Activated CD4-positive, alpha-beta memory T cell treated with anti-CD3 and anti-CD28 coated beads, Interleukin-2, amount 10 ng/mL, durations not matched to agents 7 days and 5 days (primary cell): ENCODE measurements at regions of chr2 and their contacts with region 1.

Region 1: DNA sequence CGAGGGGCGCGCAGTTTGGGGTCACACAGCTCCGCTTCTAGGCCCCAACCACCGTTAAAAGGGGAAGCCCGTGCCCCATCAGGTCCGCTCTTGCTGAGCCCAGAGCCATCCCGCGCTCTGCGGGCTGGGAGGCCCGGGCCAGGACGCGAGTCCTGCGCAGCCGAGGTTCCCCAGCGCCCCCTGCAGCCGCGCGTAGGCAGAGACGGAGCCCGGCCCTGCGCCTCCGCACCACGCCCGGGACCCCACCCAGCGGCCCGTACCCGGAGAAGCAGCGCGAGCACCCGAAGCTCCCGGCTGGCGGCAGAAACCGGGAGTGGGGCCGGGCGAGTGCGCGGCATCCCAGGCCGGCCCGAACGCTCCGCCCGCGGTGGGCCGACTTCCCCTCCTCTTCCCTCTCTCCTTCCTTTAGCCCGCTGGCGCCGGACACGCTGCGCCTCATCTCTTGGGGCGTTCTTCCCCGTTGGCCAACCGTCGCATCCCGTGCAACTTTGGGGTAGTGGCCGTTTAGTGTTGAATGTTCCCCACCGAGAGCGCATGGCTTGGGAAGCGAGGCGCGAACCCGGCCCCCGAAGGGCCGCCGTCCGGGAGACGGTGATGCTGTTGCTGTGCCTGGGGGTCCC is at the start of gene ITGA4:
- DNase-seq: peak; percentile 90
- H3K4me3 Mint-ChIP-seq: peak within 1 kb of the TSS; percentile 90
- H3K27ac Mint-ChIP-seq: peak within 1 kb of the TSS; percentile 95
- H3K4me1 Mint-ChIP-seq: peaks cover 40% of the 10 kb centered on the region
- H3K27me3 Mint-ChIP-seq: no peaks in the 10 kb centered on the region
- total RNA-seq, gene ITGA4: 252 to 265 TPM

Region 2: DNA sequence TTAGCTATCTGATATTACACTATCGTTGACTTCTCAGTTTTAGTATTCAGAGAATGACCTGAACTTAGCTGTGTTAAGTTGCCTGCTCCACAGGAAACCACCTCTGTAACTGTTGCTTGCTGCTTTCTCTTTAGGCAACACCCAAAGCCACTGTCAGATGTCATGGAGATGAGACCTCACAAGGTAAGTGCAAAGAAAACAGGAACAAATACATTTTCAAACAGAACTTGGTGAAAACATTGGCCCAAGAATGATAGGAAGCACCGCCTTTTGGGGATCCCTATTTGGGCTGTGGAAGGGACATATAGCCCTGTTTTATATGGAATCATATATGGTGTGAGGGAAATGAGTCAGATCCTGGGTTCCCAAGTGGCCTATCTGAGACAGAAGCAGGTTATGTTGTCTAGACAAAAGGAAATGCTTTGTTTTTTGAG is 333.4 kb before region 1 on chr2:
- CTCF ChIA-PET with region 1: interaction called, 14 read pairs
- POLR2A ChIA-PET with region 1: interaction called, 304 read pairs
- DNase-seq: peak; percentile 75
- H3K4me3 Mint-ChIP-seq: peak overlapping the region; percentile 48
- H3K27ac Mint-ChIP-seq: peak overlapping the region; percentile 85
- H3K4me1 Mint-ChIP-seq: peaks cover 74% of the 10 kb centered on the region
- H3K27me3 Mint-ChIP-seq: no peaks in the 10 kb centered on the region

Region 3: DNA sequence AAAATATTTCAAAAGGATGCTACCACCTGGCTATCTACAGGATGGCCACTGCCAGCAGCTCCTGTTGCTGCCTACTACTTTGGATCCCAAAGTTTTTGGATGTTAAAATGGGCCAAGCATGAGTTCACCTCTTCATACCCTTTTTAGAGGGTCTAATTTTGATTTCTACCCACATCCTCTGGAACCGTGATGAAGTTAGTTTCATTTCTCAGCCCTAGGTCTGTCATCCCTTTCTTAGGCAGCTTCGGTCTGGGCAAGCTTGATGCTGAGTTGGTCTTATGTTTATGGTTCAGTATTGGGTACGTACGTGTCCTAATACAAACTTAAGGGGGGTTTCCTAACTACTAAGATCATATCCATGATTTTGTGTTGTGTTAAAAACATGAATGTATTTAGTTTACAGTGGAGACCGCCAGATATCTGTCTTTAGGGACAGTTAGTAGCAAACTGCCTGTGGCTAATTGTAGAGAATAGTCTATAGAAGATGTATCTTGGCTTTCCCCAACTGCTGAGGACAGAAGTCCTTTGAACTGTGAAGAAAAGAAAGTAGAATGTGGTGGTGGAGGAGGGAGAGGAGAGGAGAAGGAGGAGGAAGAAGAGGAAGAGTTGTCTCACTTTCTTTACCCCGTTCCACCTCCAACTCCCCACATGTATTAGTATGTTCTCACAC is 291.9 kb before region 1 on chr2:
- CTCF ChIA-PET with region 1: interaction called, 3 read pairs
- POLR2A ChIA-PET with region 1: interaction called, 22 read pairs
- DNase-seq: no peak
- H3K4me3 Mint-ChIP-seq: peak overlapping the region; percentile 56
- H3K27ac Mint-ChIP-seq: peak overlapping the region; percentile 95
- H3K4me1 Mint-ChIP-seq: peaks cover 59% of the 10 kb centered on the region
- H3K27me3 Mint-ChIP-seq: no peaks in the 10 kb centered on the region

Region 4: GRCh38 chr2:181235683-181236459 is 221.4 kb before region 1 on chr2:
- CTCF ChIA-PET with region 1: interaction called, 4 read pairs
- POLR2A ChIA-PET with region 1: interaction called, 39 read pairs
- DNase-seq: peak; percentile 27
- H3K4me3 Mint-ChIP-seq: no peak overlapping the region
- H3K27ac Mint-ChIP-seq: peak overlapping the region; percentile 19
- H3K4me1 Mint-ChIP-seq: peaks cover 72% of the 10 kb centered on the region
- H3K27me3 Mint-ChIP-seq: no peaks in the 10 kb centered on the region

Region 5: DNA sequence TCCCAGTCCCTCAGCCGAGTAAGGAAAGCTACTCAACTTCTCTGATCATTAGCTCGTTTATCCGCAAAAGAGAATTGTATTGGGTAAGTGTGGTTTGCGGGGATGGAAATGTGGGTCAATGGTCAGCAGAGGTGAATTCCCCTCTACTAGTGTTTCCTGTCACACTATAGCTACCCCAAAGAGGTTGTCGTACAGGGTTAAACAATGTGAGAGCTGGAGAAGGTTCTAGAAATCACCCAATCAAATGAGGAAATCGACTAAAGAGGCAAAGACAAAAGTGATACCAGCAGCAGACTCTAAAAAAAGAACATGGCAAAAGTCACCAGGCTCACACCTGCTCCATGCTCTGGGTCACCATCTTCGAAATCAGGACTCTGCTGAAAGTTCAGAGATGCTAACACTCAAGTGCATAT is 144.7 kb before region 1 on chr2:
- CTCF ChIA-PET with region 1: interaction called, 59 read pairs
- POLR2A ChIA-PET with region 1: interaction called, 611 read pairs
- DNase-seq: peak; percentile 66
- H3K4me3 Mint-ChIP-seq: peak overlapping the region; percentile 67
- H3K27ac Mint-ChIP-seq: peak overlapping the region; percentile 90
- H3K4me1 Mint-ChIP-seq: peaks cover 50% of the 10 kb centered on the region
- H3K27me3 Mint-ChIP-seq: no peaks in the 10 kb centered on the region

Region 6: DNA sequence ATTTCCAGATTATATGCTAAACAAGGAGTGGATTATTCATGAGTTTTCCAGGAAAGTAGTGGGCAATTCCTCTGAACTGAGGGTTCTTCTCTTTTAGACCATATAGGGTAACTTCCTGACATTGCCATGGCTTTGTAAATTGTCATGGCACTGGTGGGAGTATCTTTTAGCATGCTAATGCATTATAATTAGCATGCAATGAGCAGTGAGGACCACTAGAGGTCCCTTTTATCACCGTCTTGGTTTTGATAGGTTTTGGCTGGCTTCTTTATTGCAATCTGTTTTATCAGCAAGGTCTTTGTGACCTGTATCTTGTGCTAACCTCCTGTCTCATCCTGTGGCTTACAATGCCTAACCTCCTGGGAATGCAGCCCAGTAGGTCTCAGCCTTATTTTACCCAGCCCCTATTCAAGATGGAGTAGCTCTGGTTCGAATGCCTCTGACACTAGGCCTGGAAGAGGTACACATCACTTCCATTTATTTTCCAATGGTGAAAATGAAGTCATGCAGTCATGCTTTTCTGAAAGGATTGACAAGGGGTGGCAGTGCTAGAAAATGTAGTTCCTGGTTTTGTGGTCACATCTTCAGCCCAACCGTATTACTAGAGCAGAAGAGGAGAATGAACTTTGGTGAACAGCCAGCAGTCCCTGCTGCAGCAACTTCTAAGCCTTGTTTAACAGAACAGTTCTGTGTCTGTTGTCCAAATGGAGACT is 26.7 kb before region 1 on chr2:
- CTCF ChIA-PET with region 1: interaction called, 11 read pairs
- POLR2A ChIA-PET with region 1: interaction called, 5 read pairs
- DNase-seq: no peak
- H3K4me3 Mint-ChIP-seq: no peak overlapping the region
- H3K27ac Mint-ChIP-seq: no peak overlapping the region
- H3K4me1 Mint-ChIP-seq: peaks cover 14% of the 10 kb centered on the region
- H3K27me3 Mint-ChIP-seq: no peaks in the 10 kb centered on the region